ENCODE measurements at regions of chr3 and their contacts with region 1.

Region 1: GRCh38 chr3:151210676-151211381 is 7.8 kb upstream of the GPR171 start:
- DNase-seq: no peak
- ATAC-seq: peak; percentile 49
- H3K4me3 ChIP-seq: no peak overlapping the region
- H3K4me3 Mint-ChIP-seq: peak overlapping the region; percentile 6 to 83 (median 62)
- H3K27ac ChIP-seq: no peak overlapping the region
- H3K27ac Mint-ChIP-seq: peak overlapping the region; percentile 77 to 93 (median 83)
- H3K4me1 ChIP-seq: peaks cover 24 to 31% of the 10 kb centered on the region in 2 donors
- H3K4me1 Mint-ChIP-seq: peaks cover 18 to 54% (median 46%) of the 10 kb centered on the region in 7 donors
- H3K27me3 ChIP-seq: no peaks in the 10 kb centered on the region
- H3K27me3 Mint-ChIP-seq: no peaks in the 10 kb centered on the region

Region 2: DNA sequence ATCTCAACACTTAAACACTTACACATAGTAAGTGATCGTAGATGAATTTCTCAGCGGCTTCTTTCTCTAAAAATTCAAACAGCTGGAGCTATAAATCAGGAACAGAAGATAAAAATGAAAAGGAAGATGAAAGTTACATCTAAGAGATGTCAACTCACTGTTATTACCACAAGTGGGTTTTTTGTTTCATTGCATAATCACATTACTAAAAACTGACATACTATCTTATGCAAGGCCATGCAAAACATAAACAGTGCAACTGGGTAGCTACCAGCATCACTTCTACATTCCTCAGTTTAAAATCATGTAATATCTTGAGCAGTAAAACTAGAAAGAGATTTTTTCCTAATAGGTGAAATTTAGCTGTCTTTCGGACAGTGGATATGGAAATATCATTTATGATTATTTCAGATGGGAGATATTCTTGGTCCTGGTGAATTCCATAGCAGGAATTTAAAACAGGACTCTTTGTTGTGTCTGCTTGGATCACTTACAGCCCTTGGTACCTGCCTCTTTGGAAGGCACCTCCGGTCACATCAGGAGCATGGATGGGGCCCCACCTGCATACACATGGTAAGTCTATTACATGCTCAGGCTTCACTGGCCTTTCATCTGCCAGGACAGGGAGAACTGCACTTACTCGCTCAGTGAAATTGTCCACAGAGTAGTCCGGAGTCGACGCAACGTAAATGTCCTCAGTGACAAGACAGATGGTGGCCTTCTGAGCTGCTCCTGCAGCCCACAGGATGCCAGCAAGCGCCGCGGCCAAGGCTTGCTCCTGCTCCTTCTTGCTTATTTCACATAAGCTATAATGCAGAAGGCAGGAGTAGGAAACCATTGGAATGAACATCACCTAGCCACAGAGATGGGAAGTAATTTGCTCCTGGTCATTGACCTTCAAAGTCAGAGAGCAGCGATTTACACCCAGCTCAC is 320.3 kb before region 1 on chr3:
- CTCF ChIA-PET with region 1: no interaction called
- POLR2A ChIA-PET with region 1: no interaction called
- intact Hi-C with region 1: no loop called
- DNase-seq: no peak
- ATAC-seq: peak; percentile 78
- H3K4me3 ChIP-seq: no peak overlapping the region
- H3K4me3 Mint-ChIP-seq: no peak overlapping the region
- H3K27ac ChIP-seq: no peak overlapping the region
- H3K27ac Mint-ChIP-seq: no peak overlapping the region
- H3K4me1 ChIP-seq: no peaks in the 10 kb centered on the region
- H3K4me1 Mint-ChIP-seq: peaks cover 0 to 2% (median 0%) of the 10 kb centered on the region in 7 donors
- H3K27me3 ChIP-seq: no peaks in the 10 kb centered on the region
- H3K27me3 Mint-ChIP-seq: peaks cover 15 to 21% (median 19%) of the 10 kb centered on the region in 5 donors

Region 3: DNA sequence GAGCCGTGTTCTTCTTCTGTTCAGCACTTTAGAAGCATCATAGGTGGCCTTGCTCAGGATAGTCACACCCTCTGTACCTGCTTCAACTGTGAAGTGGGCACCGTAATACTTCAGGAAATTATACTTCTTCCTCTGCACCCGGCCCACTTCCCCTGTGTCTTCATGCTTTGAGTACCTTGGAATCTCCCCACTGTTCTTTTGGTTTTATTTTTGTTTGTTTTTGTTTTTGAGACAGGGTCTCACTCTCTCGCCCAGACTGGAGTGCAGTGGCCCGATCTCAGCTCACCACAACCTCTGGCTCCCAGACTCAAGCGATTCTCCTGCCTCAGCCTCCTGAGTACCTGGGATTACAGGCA is 65.8 kb after region 1 on chr3:
- CTCF ChIA-PET with region 1: interaction called, 9 read pairs
- POLR2A ChIA-PET with region 1: no interaction called
- intact Hi-C with region 1: loop called in 1 of 2 experiments (anchors 1 kb)
- DNase-seq: peak in 8 of 9 donors; percentile 12 to 56 (median 25)
- ATAC-seq: peak; percentile 85
- H3K4me3 ChIP-seq: no peak overlapping the region
- H3K4me3 Mint-ChIP-seq: peak overlapping the region; percentile 8 to 76 (median 44)
- H3K27ac ChIP-seq: no peak overlapping the region
- H3K27ac Mint-ChIP-seq: peak overlapping the region; percentile 1 to 93 (median 67)
- H3K4me1 ChIP-seq: peaks cover 20 to 21% of the 10 kb centered on the region in 2 donors
- H3K4me1 Mint-ChIP-seq: peaks cover 21 to 63% (median 43%) of the 10 kb centered on the region in 7 donors
- H3K27me3 ChIP-seq: no peaks in the 10 kb centered on the region
- H3K27me3 Mint-ChIP-seq: no peaks in the 10 kb centered on the region

Region 4: DNA sequence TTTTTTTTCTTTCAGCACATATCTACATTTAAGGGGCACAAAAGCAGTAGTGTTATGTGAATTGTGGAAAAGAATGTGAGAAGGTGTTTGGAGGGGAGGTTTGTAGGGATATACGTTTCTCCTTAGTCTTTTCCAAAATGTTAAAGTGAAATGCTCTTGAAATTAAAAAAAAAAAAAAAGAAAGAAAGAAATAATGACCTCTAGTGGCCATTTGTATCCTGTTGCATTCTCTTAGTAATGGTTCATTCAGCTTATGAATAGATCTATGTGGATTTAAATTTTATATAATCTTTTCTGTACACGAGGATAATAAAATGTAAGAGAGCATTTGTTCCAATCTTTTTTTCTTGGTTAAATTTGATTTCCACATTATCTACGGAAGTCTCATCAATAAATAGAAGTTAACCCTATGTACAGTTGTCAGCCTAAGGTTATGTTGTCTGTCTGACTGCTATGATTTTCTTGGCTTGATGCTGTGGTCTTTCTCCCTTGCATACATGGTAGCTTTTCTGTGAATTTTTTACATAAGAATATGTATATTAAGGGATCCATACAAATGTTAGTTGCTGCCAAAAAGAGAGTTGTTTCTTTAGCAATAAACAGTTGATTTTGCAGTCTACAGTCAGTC is 116.9 kb after region 1 on chr3:
- CTCF ChIA-PET with region 1: no interaction called
- POLR2A ChIA-PET with region 1: no interaction called
- intact Hi-C with region 1: no loop called
- DNase-seq: no peak
- ATAC-seq: no peak
- H3K4me3 ChIP-seq: no peak overlapping the region
- H3K4me3 Mint-ChIP-seq: no peak overlapping the region
- H3K27ac ChIP-seq: no peak overlapping the region
- H3K27ac Mint-ChIP-seq: no peak overlapping the region
- H3K4me1 ChIP-seq: no peaks in the 10 kb centered on the region
- H3K4me1 Mint-ChIP-seq: peaks cover 4 to 7% (median 6%) of the 10 kb centered on the region in 7 donors
- H3K27me3 ChIP-seq: no peaks in the 10 kb centered on the region
- H3K27me3 Mint-ChIP-seq: peaks cover 10 to 30% (median 19%) of the 10 kb centered on the region in 5 donors

Region 5: DNA sequence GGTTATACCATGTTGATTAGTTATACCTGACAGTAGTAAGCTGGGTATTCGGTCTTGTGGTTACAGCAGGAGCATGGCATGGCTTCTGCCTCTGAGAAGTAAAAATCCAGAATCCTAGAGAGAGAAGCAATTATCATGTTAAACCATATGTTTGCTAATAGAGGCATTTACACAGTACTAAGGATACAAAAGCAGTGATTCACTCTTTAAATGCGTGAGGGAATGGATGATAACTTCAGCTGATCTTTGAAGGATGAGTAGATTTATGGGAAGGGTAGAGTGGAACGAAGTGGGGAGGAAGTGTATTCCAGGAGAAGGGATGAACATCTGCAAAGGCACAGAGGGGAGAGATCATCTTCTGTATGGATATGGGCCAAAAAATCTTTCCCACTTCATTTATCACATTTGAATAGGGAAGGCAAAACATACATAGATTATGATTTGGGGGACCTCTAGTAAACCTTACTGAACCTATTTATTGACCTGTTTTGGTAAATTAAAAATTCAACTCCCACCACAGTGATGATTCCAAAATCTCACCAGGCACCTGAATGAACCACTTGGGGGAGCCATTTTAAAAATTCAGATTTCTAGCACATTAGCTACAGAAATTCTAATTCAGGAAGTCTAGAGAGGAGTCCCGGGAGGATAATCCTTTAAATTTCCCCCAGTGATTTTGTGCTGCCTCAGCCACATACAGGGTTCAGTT is 215.0 kb after region 1 on chr3:
- CTCF ChIA-PET with region 1: no interaction called
- POLR2A ChIA-PET with region 1: no interaction called
- intact Hi-C with region 1: no loop called
- DNase-seq: no peak
- ATAC-seq: no peak
- H3K4me3 ChIP-seq: no peak overlapping the region
- H3K4me3 Mint-ChIP-seq: no peak overlapping the region
- H3K27ac ChIP-seq: no peak overlapping the region
- H3K27ac Mint-ChIP-seq: no peak overlapping the region
- H3K4me1 ChIP-seq: no peaks in the 10 kb centered on the region
- H3K4me1 Mint-ChIP-seq: peaks cover 0 to 2% (median 0%) of the 10 kb centered on the region in 7 donors
- H3K27me3 ChIP-seq: no peaks in the 10 kb centered on the region
- H3K27me3 Mint-ChIP-seq: peaks cover 1 to 9% (median 4%) of the 10 kb centered on the region in 5 donors

Region 6: GRCh38 chr3:151568184-151568583 is 357.4 kb after region 1 on chr3:
- CTCF ChIA-PET with region 1: no interaction called
- POLR2A ChIA-PET with region 1: no interaction called
- intact Hi-C with region 1: no loop called
- DNase-seq: no peak
- ATAC-seq: no peak
- H3K4me3 ChIP-seq: no peak overlapping the region
- H3K4me3 Mint-ChIP-seq: no peak overlapping the region
- H3K27ac ChIP-seq: no peak overlapping the region
- H3K27ac Mint-ChIP-seq: no peak overlapping the region
- H3K4me1 ChIP-seq: no peaks in the 10 kb centered on the region
- H3K4me1 Mint-ChIP-seq: no peaks in the 10 kb centered on the region
- H3K27me3 ChIP-seq: no peaks in the 10 kb centered on the region
- H3K27me3 Mint-ChIP-seq: peaks cover 0 to 8% (median 2%) of the 10 kb centered on the region in 5 donors